Endothelial cell of umbilical vein (primary cell): ENCODE measurements at regions of chr17 and their contacts with region 1.

Region 1: DNA sequence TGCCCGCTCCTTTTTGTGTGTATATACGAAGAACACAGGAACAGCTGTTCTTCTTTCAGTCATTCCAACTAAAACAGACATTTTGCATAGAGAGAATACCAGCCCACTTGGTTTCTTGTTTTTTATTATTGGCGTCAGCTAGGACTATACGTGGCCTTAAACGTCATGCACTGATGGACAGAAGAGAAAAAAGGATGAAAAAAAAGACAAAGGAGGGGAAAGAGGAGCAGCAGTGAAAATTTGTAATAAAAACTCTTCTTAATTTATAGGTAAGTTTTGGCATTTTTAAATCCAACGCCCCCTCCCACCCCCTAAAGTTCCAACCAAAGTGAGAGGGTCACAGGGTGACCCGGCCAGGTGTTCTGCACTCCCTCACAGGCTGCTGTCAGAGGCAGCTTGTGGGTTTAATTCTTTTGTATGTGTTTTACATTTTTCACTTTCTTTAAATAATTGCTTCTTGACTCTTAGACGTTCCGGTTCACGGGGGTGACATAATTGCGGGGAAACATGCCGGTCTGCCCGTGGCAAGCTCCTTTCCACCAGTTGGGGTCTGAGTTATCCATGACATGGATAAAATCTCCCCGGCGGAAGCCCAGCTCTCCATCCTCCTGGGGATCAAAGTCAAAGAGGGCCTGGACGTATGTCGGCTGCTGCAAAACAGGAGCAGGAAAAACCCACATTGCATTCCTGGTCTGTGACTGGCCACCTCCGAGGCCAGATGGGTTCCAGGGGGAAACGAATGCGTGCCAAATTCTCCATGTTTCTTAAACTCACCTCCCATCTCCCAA is 30.9 kb upstream of the SLC25A19 start:
- DNase-seq: no peak
- H3K4me3 ChIP-seq: no peak overlapping the region
- H3K27ac ChIP-seq: no peak overlapping the region
- H3K4me1 ChIP-seq: peaks cover 9% of the 10 kb centered on the region
- H3K27me3 ChIP-seq: no peaks in the 10 kb centered on the region
- CTCF ChIP-seq: no peak
- POLR2A ChIP-seq: no peak

Region 2: DNA sequence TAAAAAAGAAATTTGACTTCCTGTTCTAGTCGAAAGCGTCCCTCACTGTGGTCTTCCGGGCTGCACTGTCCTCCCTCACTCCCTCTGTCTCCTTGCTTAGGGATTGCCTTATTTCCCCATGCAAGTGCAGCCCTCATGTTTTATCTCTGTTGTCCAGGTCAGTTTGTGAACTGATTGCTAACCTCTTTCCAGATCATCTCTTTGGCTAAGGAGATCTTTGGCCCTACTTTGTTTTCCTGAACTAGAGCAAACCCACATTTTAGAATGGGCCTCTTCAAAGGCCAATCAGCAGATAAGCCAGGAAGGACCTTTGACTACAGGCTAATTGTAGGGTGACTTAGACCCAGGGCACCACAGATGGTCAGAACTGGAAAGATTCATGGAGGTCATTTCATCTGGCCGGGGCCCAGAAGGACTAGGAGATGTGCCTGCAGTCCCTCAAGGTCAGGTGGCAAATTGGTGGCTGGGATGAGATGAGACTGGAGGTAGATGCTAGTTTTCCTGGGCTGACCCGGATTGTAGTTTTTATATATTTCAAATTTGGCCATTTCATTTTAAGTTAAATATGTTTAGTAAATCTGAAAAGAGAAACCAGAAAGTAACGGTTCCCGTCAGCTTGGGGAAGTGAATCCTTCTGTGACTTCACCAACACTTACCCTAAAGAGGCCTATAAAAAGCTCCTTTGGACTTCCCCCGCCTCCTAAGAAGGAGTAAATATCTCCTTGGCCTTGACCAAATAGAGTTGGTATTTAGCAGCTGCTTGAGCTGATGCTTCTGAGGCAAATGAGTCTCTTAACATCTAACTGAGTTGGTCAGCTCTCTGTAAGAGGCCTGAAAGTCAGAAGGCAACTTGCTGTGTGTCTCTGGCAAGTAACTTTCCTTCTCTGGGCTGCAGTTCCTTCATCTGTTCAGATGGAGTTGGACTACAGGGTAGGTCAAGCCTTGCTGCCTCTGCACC is 24.6 kb before region 1 on chr17:
- CTCF ChIA-PET with region 1: interaction called, 12 read pairs
- POLR2A ChIA-PET with region 1: interaction called, 3 read pairs
- dilution Hi-C with region 1: no loop called
- intact Hi-C with region 1: no loop called
- DNase-seq: no peak
- H3K4me3 ChIP-seq: no peak overlapping the region
- H3K27ac ChIP-seq: no peak overlapping the region
- H3K4me1 ChIP-seq: no peaks in the 10 kb centered on the region
- H3K27me3 ChIP-seq: no peaks in the 10 kb centered on the region
- CTCF ChIP-seq: no peak
- POLR2A ChIP-seq: no peak

Region 3: DNA sequence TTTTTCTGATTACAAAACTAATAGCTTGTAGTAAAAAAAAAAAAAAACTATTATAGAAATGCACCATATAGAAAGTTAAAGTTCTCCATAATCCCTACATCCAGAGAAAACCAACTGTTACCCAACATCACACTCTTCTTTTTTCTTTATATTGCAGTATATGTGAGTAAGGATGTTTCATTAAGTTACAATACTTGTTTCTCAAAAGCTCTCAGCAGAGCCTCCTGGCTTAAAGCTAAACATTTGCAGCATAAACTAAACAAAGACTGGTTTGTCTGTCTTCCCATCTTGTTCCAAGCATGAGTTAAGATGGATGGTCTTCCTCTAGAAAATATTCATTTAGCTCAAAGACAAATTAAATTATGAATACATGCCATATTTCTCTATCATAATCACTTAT is 60.2 kb after region 1 on chr17:
- CTCF ChIA-PET with region 1: interaction called, 15 read pairs
- POLR2A ChIA-PET with region 1: no interaction called
- dilution Hi-C with region 1: no loop called
- intact Hi-C with region 1: no loop called
- DNase-seq: no peak
- H3K4me3 ChIP-seq: no peak overlapping the region
- H3K27ac ChIP-seq: no peak overlapping the region
- H3K4me1 ChIP-seq: no peaks in the 10 kb centered on the region
- H3K27me3 ChIP-seq: no peaks in the 10 kb centered on the region
- CTCF ChIP-seq: no peak
- POLR2A ChIP-seq: no peak

Region 4: GRCh38 chr17:75400326-75400939 is 80.3 kb after region 1 on chr17:
- CTCF ChIA-PET with region 1: interaction called, 178 read pairs
- POLR2A ChIA-PET with region 1: interaction called, 11 read pairs
- dilution Hi-C with region 1: no loop called
- intact Hi-C with region 1: loop called (anchors 1 kb)
- DNase-seq: no peak
- H3K4me3 ChIP-seq: no peak overlapping the region
- H3K27ac ChIP-seq: no peak overlapping the region
- H3K4me1 ChIP-seq: peaks cover 9% of the 10 kb centered on the region
- H3K27me3 ChIP-seq: no peaks in the 10 kb centered on the region
- CTCF ChIP-seq: no peak
- POLR2A ChIP-seq: no peak

Region 5: DNA sequence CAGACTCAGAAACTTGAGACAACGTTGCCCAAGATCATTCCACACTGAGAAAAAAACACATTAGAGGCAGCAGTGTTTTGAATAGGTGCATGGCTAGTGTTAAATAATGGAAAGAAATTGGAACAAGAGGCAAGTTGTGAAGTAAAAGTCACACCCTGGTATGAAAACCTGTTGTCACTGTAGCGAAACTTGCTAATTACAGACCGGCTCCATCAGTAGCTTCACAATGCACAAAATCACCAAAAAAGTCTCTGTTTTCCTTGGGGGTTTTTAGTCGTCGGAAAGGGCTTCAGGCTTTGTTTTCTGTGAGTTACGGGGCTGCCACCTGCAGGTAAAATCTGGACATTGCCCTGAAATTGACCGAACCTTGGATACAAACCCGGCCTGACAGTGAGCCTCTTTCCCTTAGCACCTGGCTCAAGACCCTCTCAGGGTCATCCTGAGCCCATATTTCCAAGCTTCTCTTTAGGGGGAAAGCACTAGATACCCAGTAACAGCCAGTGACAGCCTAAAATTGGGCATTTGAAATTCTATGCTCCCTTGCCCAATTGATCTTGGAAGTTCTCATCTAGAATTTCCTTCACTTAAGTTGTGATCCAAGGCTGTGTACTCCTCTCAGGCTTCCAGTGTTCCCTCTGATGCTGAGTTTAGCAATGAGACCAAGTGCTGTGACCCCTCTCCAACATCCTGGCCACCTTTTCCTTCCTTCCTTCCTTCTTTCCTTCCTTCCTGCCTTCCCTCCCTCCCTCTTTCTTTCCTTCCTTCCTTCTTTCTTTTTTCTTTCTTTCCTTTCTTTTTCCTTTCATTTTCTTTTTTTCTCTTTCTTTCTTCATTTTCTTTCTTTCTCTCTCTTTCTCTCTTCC is 92.6 kb after region 1 on chr17:
- CTCF ChIA-PET with region 1: interaction called, 178 read pairs
- POLR2A ChIA-PET with region 1: interaction called, 3 read pairs
- dilution Hi-C with region 1: no loop called
- intact Hi-C with region 1: loop called (anchors 1 kb)
- DNase-seq: peak; percentile 74
- H3K4me3 ChIP-seq: peak overlapping the region in 1 of 3 experiments; percentile 27
- H3K27ac ChIP-seq: no peak overlapping the region
- H3K4me1 ChIP-seq: peaks cover 5% of the 10 kb centered on the region
- H3K27me3 ChIP-seq: peaks cover 2 to 3% of the 10 kb centered on the region in 2 experiments
- CTCF ChIP-seq: peak; percentile 72 to 77
- POLR2A ChIP-seq: no peak